HCT116 (cell line): ENCODE measurements at regions of chr9 and their contacts with region 1.

Region 1: DNA sequence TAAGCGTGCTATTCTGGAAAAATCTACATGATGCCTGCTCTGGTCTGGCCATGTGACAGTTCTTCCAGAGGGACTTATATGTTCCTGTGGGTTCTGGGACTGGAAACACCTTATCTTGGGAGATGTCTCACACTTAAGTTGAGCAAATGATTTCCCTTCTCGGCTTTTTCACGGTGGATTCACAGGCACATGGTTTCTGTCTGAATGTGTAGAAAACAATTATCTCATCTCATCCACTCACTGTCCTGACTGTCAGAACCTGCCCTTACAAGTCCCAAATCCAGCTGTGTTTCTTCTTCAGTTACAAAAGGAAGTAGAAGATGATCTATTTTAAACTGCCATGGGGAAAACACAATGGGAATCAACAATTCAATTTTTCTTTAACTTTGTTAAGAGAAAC is 184.0 kb downstream of the SYK start:
- DNase-seq: no peak
- ATAC-seq: peak; percentile 43
- H3K4me3 ChIP-seq: no peak overlapping the region
- H3K27ac ChIP-seq: no peak overlapping the region
- H3K4me1 ChIP-seq: peaks cover 0 to 3% of the 10 kb centered on the region in 2 experiments; a peak in 1 of 4 replicates
- H3K27me3 ChIP-seq: no peaks in the 10 kb centered on the region
- CTCF ChIP-seq: no peak
- POLR2A ChIP-seq: no peak
- RAD21 ChIP-seq: no peak

Region 2: DNA sequence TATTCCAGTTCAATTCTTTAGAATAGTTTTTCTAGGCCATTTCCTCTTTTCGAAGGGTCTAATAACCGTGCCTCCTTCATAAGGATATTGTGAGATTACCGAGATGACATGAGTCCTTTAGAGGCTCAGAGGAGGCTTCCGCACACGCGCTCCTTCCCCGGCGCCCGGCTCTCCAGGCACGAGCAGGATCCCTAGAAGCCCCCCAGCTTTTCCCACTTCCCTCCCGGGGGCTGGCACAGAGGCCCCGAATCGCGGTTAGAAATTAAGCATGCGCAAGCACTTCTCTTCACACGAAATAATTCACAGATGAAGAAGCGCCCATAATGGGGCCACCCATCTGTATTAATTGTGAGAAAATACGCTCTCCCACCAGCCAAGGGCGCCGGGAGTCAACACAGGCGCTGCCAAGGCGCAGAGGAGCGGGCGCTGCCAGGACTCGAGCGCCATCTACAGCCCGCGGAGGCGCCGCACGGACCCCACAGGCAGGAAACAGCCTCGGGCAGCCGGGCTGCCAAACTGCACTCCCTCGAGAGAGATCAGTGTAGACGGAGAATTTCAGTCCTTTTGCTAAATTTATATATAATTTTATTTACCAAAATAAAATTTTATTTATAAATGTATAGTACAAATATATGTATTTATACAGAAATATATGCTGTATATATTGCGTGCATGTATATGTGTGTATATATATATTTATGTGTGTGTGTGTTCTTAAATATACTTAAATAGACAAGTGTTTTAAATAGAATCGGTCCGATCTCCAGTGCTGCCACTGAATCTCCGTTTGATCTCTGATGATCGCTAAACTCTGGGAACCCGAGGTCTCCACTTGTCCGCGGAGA is 696.1 kb after region 1 on chr9:
- CTCF ChIA-PET with region 1: no interaction called
- POLR2A ChIA-PET with region 1: no interaction called
- RAD21 ChIA-PET with region 1: no interaction called
- intact Hi-C with region 1: loop called (anchors 10 kb)
- DNase-seq: peak; percentile 45
- ATAC-seq: peak; percentile 100
- H3K4me3 ChIP-seq: no peak overlapping the region
- H3K27ac ChIP-seq: no peak overlapping the region
- H3K4me1 ChIP-seq: no peaks in the 10 kb centered on the region; a peak in 1 of 4 replicates
- H3K27me3 ChIP-seq: no peaks in the 10 kb centered on the region
- CTCF ChIP-seq: peak; percentile 87 to 98 (median 94)
- POLR2A ChIP-seq: no peak
- RAD21 ChIP-seq: peak; percentile 94